T-cell (primary cell): ENCODE measurements at regions of chr18 and their contacts with region 1.

Region 1: DNA sequence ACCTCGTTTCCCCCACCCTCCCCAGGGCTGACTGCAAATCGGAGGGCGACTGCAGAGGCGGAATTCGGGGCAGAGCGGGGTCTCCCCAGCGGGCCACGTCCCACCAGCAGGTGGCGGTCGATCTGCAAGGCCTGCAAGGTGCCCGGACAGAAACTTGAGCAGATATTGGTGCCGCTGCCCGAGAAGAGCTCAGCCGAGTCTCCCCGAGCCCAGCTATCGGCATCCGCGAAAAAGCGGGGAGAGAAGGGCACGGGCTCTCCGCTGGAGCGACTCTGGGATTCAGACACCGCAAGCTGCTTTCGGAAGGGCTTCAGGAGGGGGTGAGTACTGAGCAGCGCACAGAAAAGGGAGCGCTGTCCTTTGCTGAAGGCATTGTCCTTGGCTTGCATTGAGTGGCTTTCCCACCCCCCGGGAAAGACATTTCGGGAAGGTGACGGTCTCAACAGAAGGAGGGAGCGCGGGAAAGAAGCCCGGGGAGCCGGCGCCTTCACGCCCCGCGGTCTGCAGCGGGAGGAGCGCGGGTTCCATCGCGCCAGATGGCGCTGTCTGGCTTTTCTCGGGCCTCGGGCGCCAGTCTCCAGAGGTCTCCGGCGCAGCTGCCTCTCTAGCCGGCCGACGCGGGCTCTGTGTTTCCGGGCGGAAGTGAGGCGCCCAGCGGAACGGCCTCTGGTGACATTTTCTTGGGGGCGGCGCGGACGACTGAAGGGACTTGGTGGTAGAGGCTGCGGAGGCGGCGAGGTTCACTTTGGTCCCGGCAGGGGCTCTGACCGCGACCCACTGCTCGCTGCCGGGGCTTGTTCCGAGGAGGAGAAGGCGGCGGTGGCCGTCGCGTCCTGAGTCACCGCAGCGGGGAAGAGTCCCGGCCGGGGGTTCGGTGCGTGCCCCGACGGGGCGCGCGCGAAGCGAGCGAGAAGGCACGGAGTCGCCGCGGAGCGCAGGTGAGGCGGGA is 69.5 kb downstream of the HAUS1 start:
- DNase-seq: peak; percentile 86 to 95 (median 92)
- ATAC-seq: peak; percentile 90 to 95 (median 92)
- H3K4me3 ChIP-seq: peak overlapping the region; percentile 100
- H3K4me3 Mint-ChIP-seq: peak overlapping the region; percentile 98 to 99 (median 99)
- H3K27ac ChIP-seq: peak overlapping the region; percentile 81
- H3K27ac Mint-ChIP-seq: peak overlapping the region; percentile 96 to 99
- H3K4me1 ChIP-seq: peaks cover 11 to 39% of the 10 kb centered on the region in 2 experiments
- H3K4me1 Mint-ChIP-seq: peaks cover 36 to 52% (median 37%) of the 10 kb centered on the region in 3 donors
- H3K27me3 ChIP-seq: no peaks in the 10 kb centered on the region
- H3K27me3 Mint-ChIP-seq: no peaks in the 10 kb centered on the region

Region 2: GRCh38 chr18:45580127-45580526 is 593.5 kb before region 1 on chr18:
- CTCF ChIA-PET with region 1: no interaction called
- POLR2A ChIA-PET with region 1: no interaction called
- DNase-seq: no peak
- ATAC-seq: no peak
- H3K4me3 ChIP-seq: no peak overlapping the region
- H3K4me3 Mint-ChIP-seq: no peak overlapping the region
- H3K27ac ChIP-seq: no peak overlapping the region
- H3K27ac Mint-ChIP-seq: no peak overlapping the region
- H3K4me1 ChIP-seq: no peaks in the 10 kb centered on the region
- H3K4me1 Mint-ChIP-seq: no peaks in the 10 kb centered on the region
- H3K27me3 ChIP-seq: no peaks in the 10 kb centered on the region
- H3K27me3 Mint-ChIP-seq: peaks cover 1 to 10% of the 10 kb centered on the region in 2 donors

Region 3: GRCh38 chr18:46148810-46149209 is 24.9 kb before region 1 on chr18:
- CTCF ChIA-PET with region 1: interaction called, 4 to 13 read pairs
- POLR2A ChIA-PET with region 1: no interaction called
- DNase-seq: peak in 24 of 35 experiments; percentile 15 to 73 (median 34)
- ATAC-seq: peak; percentile 60 to 69 (median 66)
- H3K4me3 ChIP-seq: no peak overlapping the region
- H3K4me3 Mint-ChIP-seq: peak overlapping the region in 1 of 3 donors; percentile 9
- H3K27ac ChIP-seq: no peak overlapping the region
- H3K27ac Mint-ChIP-seq: peak overlapping the region; percentile 61 to 69
- H3K4me1 ChIP-seq: peaks cover 0 to 37% of the 10 kb centered on the region in 2 experiments
- H3K4me1 Mint-ChIP-seq: peaks cover 37 to 49% (median 46%) of the 10 kb centered on the region in 3 donors
- H3K27me3 ChIP-seq: no peaks in the 10 kb centered on the region
- H3K27me3 Mint-ChIP-seq: no peaks in the 10 kb centered on the region

Region 4: GRCh38 chr18:46158498-46158897 is 15.2 kb before region 1 on chr18:
- CTCF ChIA-PET with region 1: interaction called, 6 to 17 read pairs
- POLR2A ChIA-PET with region 1: no interaction called
- DNase-seq: no peak
- ATAC-seq: no peak
- H3K4me3 ChIP-seq: no peak overlapping the region
- H3K4me3 Mint-ChIP-seq: no peak overlapping the region
- H3K27ac ChIP-seq: no peak overlapping the region
- H3K27ac Mint-ChIP-seq: peak overlapping the region; percentile 95 to 99
- H3K4me1 ChIP-seq: peaks cover 31 to 61% of the 10 kb centered on the region in 2 experiments
- H3K4me1 Mint-ChIP-seq: peaks cover 62 to 82% (median 74%) of the 10 kb centered on the region in 3 donors
- H3K27me3 ChIP-seq: no peaks in the 10 kb centered on the region
- H3K27me3 Mint-ChIP-seq: no peaks in the 10 kb centered on the region

Region 5: GRCh38 chr18:46184727-46185126 is 11.1 kb after region 1 on chr18:
- CTCF ChIA-PET with region 1: interaction called, 4 to 12 read pairs
- POLR2A ChIA-PET with region 1: no interaction called
- DNase-seq: no peak
- ATAC-seq: no peak
- H3K4me3 ChIP-seq: no peak overlapping the region
- H3K4me3 Mint-ChIP-seq: no peak overlapping the region
- H3K27ac ChIP-seq: no peak overlapping the region
- H3K27ac Mint-ChIP-seq: peak overlapping the region; percentile 35 to 78
- H3K4me1 ChIP-seq: peaks cover 9 to 40% of the 10 kb centered on the region in 2 experiments
- H3K4me1 Mint-ChIP-seq: peaks cover 66 to 73% (median 67%) of the 10 kb centered on the region in 3 donors
- H3K27me3 ChIP-seq: no peaks in the 10 kb centered on the region
- H3K27me3 Mint-ChIP-seq: no peaks in the 10 kb centered on the region

Region 6: GRCh38 chr18:46213295-46213694 is 39.6 kb after region 1 on chr18:
- CTCF ChIA-PET with region 1: interaction called, 15 to 42 read pairs
- POLR2A ChIA-PET with region 1: interaction called in 1 of 2 experiments, 3 read pairs
- DNase-seq: peak in 1 of 35 experiments; percentile 56
- ATAC-seq: peak in 1 of 4 experiments; percentile 45
- H3K4me3 ChIP-seq: no peak overlapping the region
- H3K4me3 Mint-ChIP-seq: no peak overlapping the region
- H3K27ac ChIP-seq: no peak overlapping the region
- H3K27ac Mint-ChIP-seq: no peak overlapping the region
- H3K4me1 ChIP-seq: peaks cover 15 to 19% of the 10 kb centered on the region in 2 experiments
- H3K4me1 Mint-ChIP-seq: peaks cover 86 to 89% (median 87%) of the 10 kb centered on the region in 3 donors
- H3K27me3 ChIP-seq: no peaks in the 10 kb centered on the region
- H3K27me3 Mint-ChIP-seq: no peaks in the 10 kb centered on the region

Region 7: DNA sequence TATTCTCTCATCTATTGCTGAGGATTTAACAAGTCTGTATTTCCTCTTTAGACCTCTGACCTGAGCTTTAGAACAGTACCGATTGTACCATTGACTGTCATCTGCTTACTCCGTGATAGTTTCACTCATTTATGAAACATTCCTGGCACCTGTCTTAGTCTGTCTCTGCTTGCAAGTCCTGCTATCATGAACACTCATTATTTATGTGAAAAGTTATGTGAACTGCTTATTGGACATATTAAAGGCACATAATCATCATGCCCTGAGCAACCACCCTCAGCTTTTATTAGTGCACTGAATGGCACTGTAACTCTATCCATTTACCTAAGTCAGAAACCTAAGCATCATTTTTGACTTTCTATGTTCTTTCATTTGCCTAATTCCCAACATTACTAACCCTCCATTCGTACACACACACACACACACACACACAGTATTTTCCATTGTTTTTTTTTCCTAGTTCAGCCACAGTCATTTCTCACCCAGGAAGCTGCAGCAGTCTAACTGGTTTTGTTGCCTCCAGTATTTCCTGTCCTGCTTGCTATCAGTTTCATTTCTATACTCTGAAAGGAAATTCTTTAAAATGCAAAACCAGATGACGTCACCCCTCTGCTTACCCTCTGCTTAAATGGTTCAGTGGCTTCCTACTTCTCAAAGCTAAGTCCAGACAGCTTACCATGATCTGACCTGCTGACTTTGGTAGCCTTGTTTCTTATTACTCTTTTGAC is 76.6 kb after region 1 on chr18:
- CTCF ChIA-PET with region 1: interaction called, 7 to 19 read pairs
- POLR2A ChIA-PET with region 1: no interaction called
- DNase-seq: peak in 31 of 35 experiments; percentile 10 to 89 (median 41)
- ATAC-seq: peak; percentile 90 to 97 (median 96)
- H3K4me3 ChIP-seq: peak overlapping the region in 1 of 2 donors; percentile 13
- H3K4me3 Mint-ChIP-seq: peak overlapping the region; percentile 64 to 82 (median 70)
- H3K27ac ChIP-seq: peak overlapping the region; percentile 91
- H3K27ac Mint-ChIP-seq: peak overlapping the region; percentile 93 to 98
- H3K4me1 ChIP-seq: peaks cover 19 to 33% of the 10 kb centered on the region in 2 experiments
- H3K4me1 Mint-ChIP-seq: peaks cover 53 to 64% (median 59%) of the 10 kb centered on the region in 3 donors
- H3K27me3 ChIP-seq: no peaks in the 10 kb centered on the region
- H3K27me3 Mint-ChIP-seq: no peaks in the 10 kb centered on the region

Region 8: GRCh38 chr18:46657115-46657955 is 483.7 kb after region 1 on chr18 and contains the start of gene LOXHD1:
- CTCF ChIA-PET with region 1: interaction called, 13 to 24 read pairs
- POLR2A ChIA-PET with region 1: no interaction called
- DNase-seq: no peak
- ATAC-seq: no peak
- H3K4me3 ChIP-seq: no peak within 1 kb of the TSS
- H3K4me3 Mint-ChIP-seq: no peak within 1 kb of the TSS
- H3K27ac ChIP-seq: no peak within 1 kb of the TSS
- H3K27ac Mint-ChIP-seq: no peak within 1 kb of the TSS
- H3K4me1 ChIP-seq: peaks cover 0 to 3% of the 10 kb centered on the region in 2 experiments
- H3K4me1 Mint-ChIP-seq: peaks cover 0 to 2% (median 0%) of the 10 kb centered on the region in 3 donors
- H3K27me3 ChIP-seq: peaks cover 0 to 11% of the 10 kb centered on the region in 2 experiments
- H3K27me3 Mint-ChIP-seq: no peaks in the 10 kb centered on the region
- total RNA-seq, gene LOXHD1: 0.07 to 0.21 (median 0.15) TPM in 4 of 5 donors, not detected in the other